ENCODE measurements at regions of chr19 and their contacts with region 1.

Region 1: DNA sequence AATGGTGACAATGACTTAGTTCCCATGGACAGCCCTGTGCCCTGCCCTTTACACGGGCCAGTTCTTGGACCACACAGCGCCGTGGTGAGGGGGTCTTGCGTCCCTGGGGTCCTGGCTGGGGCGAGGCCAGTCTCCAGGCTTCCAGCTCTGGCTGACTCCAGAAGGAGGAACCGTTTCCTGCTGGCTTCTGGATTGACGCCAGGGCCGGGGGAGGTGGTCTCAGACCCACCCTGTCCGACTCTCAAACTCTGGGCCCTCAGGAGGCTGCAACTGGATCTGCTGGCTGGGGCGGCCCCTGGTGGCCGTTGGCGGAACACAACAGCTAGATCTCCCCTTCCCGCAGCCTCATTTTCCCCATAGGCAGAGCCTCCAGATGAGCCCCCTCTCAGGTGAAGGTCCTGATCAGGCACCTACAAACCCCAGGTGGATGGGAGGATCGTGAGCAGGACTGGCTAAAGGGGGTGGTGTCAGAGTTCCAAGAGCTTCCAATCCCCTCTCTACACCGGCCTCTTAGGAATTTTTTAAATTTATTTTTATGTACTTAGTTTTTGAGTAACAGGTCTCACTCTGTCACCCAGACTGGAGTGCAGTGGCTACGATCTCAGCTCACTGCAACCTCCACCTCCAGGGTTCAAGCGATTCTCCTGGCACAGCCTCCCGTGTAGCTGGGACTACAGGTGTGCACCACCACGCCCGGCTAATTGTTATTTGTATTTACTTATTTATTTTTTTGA is 8.0 kb downstream of the CCDC194 start:
- DNase-seq: peak; percentile 83
- CTCF ChIP-seq: peak; percentile 90

Region 2: DNA sequence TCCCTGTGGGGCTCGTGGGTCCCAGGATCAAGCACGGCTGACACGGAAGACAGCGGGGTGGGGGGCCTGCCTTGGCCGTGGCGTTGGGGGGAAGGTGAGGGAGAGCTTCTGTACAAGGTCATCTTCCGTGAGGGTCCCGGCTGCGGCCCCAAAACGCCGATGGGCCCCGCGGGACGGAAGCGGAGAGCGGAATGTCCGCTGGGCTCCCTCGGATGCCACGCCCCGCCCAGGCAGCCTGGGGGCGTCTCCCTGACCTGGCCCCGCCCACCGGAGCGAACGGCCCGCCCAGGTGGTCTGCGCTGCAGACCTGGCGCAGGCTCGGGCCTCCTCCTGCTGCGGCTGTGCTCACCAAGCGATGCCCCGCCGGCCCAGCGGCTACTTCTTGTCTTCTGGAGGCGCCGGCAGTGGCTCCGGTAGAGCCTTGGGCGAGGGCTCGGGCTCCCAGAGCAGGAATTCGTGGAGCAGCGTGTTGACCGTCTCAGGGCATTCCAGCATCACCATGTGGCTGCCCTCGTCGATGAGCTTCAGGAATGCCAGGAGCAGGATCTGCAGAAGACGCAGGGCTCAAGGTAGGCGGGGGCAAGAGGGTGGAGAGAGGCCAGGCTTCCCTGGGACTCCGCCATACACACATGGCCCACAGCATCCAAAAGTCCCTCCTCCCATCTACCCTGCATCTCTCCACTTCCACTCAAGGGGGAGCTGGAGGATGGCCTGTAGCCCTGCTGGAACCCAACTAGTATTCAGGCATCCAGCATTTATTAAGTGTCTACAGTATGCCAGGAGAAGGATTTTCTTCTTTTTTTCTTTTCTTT is 93.6 kb before region 1 on chr19:
- in situ Hi-C with region 1: loop called (anchors 10 kb)
- DNase-seq: peak; percentile 98
- CTCF ChIP-seq: peak; percentile 85

Region 3: GRCh38 chr19:17305517-17306284 is 80.3 kb before region 1 on chr19 and contains the start of gene MRPL34:
- in situ Hi-C with region 1: no loop called
- DNase-seq: peak; percentile 90
- CTCF ChIP-seq: peak; percentile 72

Region 4: GRCh38 chr19:17346109-17346671 is 39.9 kb before region 1 on chr19:
- in situ Hi-C with region 1: loop called (anchors 5 kb)
- DNase-seq: peak; percentile 90
- CTCF ChIP-seq: peak; percentile 92

Measured in GM13976 (cell line).